ENCODE measurements at regions of chr15 and their contacts with region 1.

Region 1: DNA sequence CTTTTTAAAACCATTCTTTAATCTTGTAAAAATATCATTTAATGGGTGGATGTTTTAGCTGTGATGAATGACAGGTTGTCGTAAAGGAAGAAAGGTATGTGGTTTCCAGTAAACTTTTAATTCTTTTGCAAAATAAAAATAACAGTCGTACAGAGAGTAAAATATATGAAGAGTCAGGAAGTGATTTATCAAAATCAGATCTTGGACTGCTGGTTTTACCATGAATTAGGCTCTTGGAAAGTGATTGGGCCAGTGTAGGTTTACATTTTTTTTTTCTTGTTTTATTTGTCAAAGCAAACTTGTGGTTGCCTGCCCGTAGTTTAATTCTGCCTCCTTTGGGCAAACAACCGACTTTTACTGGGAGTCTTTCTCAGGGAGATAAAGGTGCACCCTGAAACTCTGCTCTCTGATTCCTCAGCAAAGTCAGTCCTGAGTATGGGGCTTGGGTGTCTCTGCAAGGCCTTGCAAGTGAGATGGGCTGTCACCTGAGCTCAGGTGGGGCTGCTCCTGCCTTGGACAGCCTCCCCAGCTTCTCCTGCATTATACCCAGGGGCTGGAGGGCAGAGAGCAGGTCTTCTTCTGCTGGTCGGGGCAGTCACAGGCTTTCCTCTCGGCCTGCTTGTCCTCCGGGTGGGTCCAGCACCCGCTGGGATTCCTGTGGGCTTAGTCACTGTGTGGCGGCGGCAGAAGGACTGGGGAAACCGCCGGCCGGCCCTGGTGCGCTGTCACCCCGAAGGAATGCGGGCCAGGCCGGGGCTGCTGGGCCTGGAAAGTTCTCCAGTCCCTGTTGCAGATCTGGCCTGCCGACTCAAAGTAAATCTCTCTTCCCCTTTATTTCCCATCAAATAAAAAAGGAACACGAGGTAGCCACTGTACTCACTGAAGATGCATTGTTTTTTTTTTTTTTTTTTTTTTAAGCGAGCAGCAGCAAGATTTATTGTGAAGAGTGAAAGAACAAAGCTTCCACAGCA is 79.1 kb downstream of the IGF1R start:
- DNase-seq: peak; percentile 92 to 94
- H3K4me3 ChIP-seq: no peak overlapping the region
- H3K4me3 Mint-ChIP-seq: peak overlapping the region; percentile 64
- H3K27ac Mint-ChIP-seq: peak overlapping the region; percentile 99
- H3K4me1 ChIP-seq: peaks cover 74% of the 10 kb centered on the region
- H3K4me1 Mint-ChIP-seq: peaks cover 39% of the 10 kb centered on the region
- H3K27me3 ChIP-seq: no peaks in the 10 kb centered on the region
- H3K27me3 Mint-ChIP-seq: no peaks in the 10 kb centered on the region
- CTCF ChIP-seq: no peak

Region 2: DNA sequence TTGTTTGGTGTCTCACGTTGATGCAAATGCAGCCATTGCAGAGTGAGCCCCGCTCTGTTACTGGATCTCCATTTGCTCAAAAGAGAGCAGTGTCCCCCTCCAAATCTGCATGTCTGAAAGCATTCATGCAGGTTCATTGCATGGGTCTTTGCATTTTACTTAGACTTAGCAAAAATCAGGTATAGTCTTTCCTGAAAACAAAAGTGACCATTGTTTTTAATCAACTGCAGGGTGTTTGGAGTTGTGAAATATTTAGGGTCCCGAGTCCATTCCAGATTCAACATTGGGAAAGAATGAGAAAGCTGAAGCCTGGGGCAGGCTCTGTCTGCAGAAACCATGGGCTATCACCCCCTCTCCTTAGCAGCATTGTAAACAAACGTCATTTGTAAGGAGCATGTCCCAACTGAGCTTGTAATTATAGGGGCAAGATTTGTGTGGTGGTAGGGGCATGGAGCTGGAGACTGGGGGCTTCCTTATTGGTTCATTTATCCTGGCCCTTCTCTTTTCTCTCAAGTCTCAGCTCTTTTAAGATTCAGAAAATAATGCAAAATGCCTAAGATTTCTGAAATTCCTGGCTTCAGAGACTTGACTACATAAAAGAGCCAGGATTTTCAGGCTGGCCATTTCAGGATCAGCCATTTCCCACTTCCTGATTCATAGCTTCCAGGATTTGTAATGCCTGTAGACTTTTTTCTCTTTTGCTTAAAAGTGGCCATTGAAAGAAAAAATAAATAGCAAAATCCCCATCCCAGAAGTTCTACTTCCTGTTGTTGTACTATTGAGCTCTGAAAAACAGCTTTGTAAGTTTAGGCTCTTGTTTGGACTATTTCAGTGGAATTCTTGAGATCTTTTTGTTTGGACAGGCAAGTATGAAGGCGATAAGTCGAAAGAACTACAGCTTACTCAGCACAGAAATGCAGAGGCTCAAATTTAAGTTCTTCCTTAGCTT is 56.1 kb before region 1 on chr15:
- CTCF ChIA-PET with region 1: interaction called, 3 read pairs
- POLR2A ChIA-PET with region 1: no interaction called
- intact Hi-C with region 1: loop called (anchors 5 kb)
- DNase-seq: peak in 1 of 2 experiments; percentile 60
- H3K4me3 ChIP-seq: no peak overlapping the region
- H3K4me3 Mint-ChIP-seq: peak overlapping the region; percentile 56
- H3K27ac Mint-ChIP-seq: peak overlapping the region; percentile 82
- H3K4me1 ChIP-seq: peaks cover 68% of the 10 kb centered on the region
- H3K4me1 Mint-ChIP-seq: peaks cover 42% of the 10 kb centered on the region
- H3K27me3 ChIP-seq: no peaks in the 10 kb centered on the region
- H3K27me3 Mint-ChIP-seq: no peaks in the 10 kb centered on the region
- CTCF ChIP-seq: no peak

Region 3: GRCh38 chr15:98684436-98684835 is 43.0 kb before region 1 on chr15:
- CTCF ChIA-PET with region 1: no interaction called
- POLR2A ChIA-PET with region 1: no interaction called
- intact Hi-C with region 1: no loop called
- DNase-seq: no peak
- H3K4me3 ChIP-seq: no peak overlapping the region
- H3K4me3 Mint-ChIP-seq: no peak overlapping the region
- H3K27ac Mint-ChIP-seq: no peak overlapping the region
- H3K4me1 ChIP-seq: 0 out of 2 replicates have a peak, but pooled peaks cover under 1% of the 10 kb centered on the region
- H3K4me1 Mint-ChIP-seq: peaks cover 22% of the 10 kb centered on the region
- H3K27me3 ChIP-seq: no peaks in the 10 kb centered on the region
- H3K27me3 Mint-ChIP-seq: no peaks in the 10 kb centered on the region
- CTCF ChIP-seq: no peak

Region 4: GRCh38 chr15:98850961-98851573 is 123.7 kb after region 1 on chr15:
- CTCF ChIA-PET with region 1: interaction called, 12 read pairs
- POLR2A ChIA-PET with region 1: no interaction called
- intact Hi-C with region 1: no loop called
- DNase-seq: peak; percentile 70 to 73
- H3K4me3 ChIP-seq: no peak overlapping the region
- H3K4me3 Mint-ChIP-seq: peak overlapping the region; percentile 79
- H3K27ac Mint-ChIP-seq: peak overlapping the region; percentile 22
- H3K4me1 ChIP-seq: peaks cover 10% of the 10 kb centered on the region
- H3K4me1 Mint-ChIP-seq: peaks cover 35% of the 10 kb centered on the region
- H3K27me3 ChIP-seq: no peaks in the 10 kb centered on the region
- H3K27me3 Mint-ChIP-seq: no peaks in the 10 kb centered on the region
- CTCF ChIP-seq: peak; percentile 53 to 74

Region 5: DNA sequence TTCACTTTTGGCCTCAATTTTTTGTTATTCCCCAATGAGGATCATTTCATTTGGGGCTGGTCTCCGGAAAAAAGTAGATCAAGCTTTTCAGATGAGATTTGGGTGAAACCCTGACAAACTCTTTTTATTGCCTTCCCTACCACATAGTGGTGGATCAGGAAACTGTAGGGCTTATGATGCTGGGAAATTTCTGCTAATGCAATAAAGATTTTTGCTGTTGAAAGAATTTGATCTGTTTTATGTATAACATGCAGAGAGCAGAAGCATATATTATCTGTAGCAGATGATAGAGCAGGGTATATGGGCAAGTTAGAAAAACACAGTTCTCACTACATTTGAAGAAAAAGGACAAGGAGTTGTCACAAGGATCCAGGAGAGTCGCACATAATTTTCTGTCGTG is 134.5 kb after region 1 on chr15:
- CTCF ChIA-PET with region 1: no interaction called
- POLR2A ChIA-PET with region 1: no interaction called
- intact Hi-C with region 1: no loop called
- DNase-seq: no peak
- H3K4me3 ChIP-seq: no peak overlapping the region
- H3K4me3 Mint-ChIP-seq: no peak overlapping the region
- H3K27ac Mint-ChIP-seq: peak overlapping the region; percentile 29
- H3K4me1 ChIP-seq: peaks cover 45% of the 10 kb centered on the region
- H3K4me1 Mint-ChIP-seq: peaks cover 41% of the 10 kb centered on the region
- H3K27me3 ChIP-seq: no peaks in the 10 kb centered on the region
- H3K27me3 Mint-ChIP-seq: no peaks in the 10 kb centered on the region
- CTCF ChIP-seq: no peak

Region 6: DNA sequence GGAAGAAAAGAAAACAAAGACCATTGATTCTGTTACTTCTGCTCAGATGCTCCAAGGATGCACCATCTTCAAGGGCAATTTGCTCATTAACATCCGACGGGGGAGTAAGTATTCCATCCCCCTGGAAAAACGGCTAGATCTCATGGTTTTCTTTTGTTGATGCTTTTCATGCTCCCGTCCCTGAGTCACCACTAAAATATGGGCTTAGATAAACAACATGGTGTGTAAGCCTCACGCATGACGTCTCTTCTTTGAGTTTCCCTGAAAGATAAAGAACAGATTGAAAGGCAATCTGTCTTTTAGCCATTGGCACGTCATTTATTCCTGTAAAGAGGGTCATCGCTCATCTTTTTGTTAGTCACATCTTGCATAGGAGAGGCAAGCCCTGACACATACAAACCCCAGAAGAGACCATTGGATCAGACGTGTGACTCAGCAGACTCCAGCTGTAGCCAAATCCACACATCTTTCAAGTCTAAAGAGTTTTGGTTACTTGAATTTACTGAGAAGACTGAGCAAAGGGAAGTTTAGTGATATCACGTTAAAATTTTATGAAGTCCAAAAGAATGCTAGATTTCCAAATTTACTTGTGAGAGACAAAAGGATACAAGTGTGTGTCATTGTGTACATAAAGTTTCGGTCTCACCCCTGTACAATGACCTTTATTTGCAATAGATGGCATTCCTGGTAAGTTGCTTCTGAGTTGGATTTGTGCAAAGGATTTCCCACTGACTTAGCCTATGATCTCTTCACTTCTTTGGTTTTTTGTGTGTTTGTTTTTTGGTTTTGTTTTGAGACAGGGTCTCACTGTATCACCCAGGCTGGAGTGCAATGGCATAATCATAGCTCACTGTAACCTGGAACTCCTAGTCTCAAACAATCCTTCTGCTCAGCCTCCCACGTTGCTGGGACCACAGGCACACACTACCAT is 169.7 kb after region 1 on chr15:
- CTCF ChIA-PET with region 1: no interaction called
- POLR2A ChIA-PET with region 1: no interaction called
- intact Hi-C with region 1: loop called (anchors 5 kb)
- DNase-seq: peak; percentile 70 to 76
- H3K4me3 ChIP-seq: no peak overlapping the region
- H3K4me3 Mint-ChIP-seq: peak overlapping the region; percentile 66
- H3K27ac Mint-ChIP-seq: peak overlapping the region; percentile 95
- H3K4me1 ChIP-seq: peaks cover 57% of the 10 kb centered on the region
- H3K4me1 Mint-ChIP-seq: peaks cover 40% of the 10 kb centered on the region
- H3K27me3 ChIP-seq: no peaks in the 10 kb centered on the region
- H3K27me3 Mint-ChIP-seq: no peaks in the 10 kb centered on the region
- CTCF ChIP-seq: no peak